ENCODE measurements at regions of chr6 and their contacts with region 1.

Region 1: DNA sequence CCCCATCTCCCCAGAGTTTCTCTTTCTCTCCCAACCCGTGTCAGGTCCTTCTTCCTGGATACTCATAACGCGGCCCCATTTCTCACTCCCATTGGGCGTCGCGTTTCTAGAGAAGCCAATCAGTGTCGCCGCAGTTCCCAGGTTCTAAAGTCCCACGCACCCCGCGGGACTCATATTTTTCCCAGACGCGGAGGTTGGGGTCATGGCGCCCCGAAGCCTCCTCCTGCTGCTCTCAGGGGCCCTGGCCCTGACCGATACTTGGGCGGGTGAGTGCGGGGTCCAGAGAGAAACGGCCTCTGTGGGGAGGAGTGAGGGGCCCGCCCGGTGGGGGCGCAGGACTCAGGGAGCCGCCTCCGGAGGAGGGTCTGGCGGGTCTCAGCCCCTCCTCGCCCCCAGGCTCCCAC is at the start of gene HLA-F:
- DNase-seq: peak; percentile 90
- H3K4me3 Mint-ChIP-seq: peak within 1 kb of the TSS; percentile 86
- H3K27ac Mint-ChIP-seq: peak within 1 kb of the TSS; percentile 92
- H3K4me1 Mint-ChIP-seq: peaks cover 58% of the 10 kb centered on the region
- H3K27me3 Mint-ChIP-seq: no peaks in the 10 kb centered on the region
- total RNA-seq, gene HLA-F: 256 to 270 TPM

Region 2: GRCh38 chr6:29907637-29908340 is 184.5 kb after region 1 on chr6:
- CTCF ChIA-PET with region 1: no interaction called
- POLR2A ChIA-PET with region 1: no interaction called
- intact Hi-C with region 1: no loop called
- DNase-seq: no peak
- H3K4me3 Mint-ChIP-seq: no peak overlapping the region
- H3K27ac Mint-ChIP-seq: no peak overlapping the region
- H3K4me1 Mint-ChIP-seq: peaks cover 11% of the 10 kb centered on the region
- H3K27me3 Mint-ChIP-seq: peaks cover 10% of the 10 kb centered on the region

Region 3: DNA sequence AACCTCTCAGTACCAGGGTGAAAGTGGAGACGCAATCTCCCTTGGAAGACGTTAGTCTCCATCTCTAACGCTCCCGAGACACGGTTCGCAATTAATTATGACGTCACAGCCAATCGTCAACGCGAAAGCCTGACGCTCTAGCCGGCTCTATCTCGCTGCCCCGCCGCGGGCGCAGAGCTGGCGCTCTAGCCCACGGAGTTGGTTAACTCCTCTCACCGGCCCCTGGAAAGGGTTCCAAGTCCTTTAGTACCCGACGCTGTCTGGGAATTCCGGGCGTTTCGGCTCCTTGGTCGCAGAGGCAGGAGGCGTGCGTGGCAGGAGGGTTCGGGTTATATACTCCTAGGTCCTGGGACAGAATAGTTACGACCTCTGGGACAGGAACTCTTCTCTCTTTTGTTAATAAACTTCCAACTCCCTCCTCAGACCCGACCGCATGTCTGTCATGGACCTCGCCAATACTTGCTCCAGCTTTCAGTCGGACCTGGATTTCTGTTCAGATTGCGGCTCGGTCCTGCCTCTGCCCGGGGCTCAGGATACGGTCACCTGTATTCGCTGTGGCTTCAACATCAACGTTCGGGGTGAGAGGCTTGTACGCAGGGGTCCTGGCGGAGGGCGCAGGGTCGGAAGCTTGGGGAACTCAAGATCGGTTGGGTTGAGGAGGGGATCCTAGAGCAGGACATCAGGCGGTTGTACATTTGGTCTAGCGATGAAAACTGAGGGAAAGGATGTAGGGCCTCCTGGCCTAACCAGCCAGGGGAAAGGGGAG is 338.0 kb after region 1 on chr6 and contains the start of gene POLR1H:
- CTCF ChIA-PET with region 1: no interaction called
- POLR2A ChIA-PET with region 1: no interaction called
- intact Hi-C with region 1: loop called (anchors 5 kb)
- DNase-seq: peak; percentile 92
- H3K4me3 Mint-ChIP-seq: peak within 1 kb of the TSS; percentile 99
- H3K27ac Mint-ChIP-seq: peak within 1 kb of the TSS; percentile 99
- H3K4me1 Mint-ChIP-seq: peaks cover 35% of the 10 kb centered on the region
- H3K27me3 Mint-ChIP-seq: no peaks in the 10 kb centered on the region
- total RNA-seq, gene POLR1H: 69.4 to 73.2 TPM

Measured in activated CD4-positive, alpha-beta memory T cell treated with anti-CD3 and anti-CD28 coated beads for 36 hours (primary cell).